Vagina (tissue), 2 donors: ENCODE measurements at regions of chr2 and their contacts with region 1.

Region 1: DNA sequence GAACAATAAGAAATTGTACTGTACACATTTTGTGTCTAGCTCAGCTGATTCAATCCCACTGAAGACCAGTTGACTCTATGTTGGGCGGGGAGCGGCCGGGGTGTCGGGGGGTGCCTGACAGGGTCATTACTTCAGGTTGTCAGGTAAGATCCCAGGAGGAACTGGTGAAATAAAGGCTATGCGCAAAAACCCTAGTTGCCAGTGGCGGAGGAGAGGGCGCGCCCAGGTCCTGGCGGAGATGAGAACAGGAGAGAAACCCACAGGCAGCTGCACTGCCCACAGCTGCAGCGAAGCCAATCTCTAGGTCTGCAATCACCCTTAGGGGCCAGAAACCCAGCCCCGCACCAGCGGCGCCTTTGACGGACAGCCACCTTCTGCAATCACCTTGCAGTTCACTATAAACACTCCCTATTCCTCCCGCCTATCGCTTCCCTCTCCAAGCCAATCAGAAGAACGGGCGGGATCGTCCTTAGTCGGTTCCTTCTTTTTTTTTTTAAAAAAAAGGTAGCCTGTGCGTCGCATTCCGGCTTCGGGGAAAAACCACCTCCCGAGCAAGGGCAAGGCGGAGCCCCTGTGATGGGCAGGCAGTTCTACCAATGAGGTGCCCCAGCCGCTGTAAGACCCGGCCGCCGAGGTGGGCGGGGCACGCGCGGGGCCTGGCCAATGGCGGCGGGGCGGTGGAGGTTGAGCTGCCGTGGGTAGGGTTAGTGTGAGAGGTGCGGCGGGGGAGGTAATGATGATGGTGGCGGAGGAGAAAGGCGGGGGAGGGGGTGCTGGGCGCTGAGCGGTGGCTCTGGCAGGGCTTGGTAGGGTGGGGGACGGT is at the start of gene EHBP1:
- DNase-seq: peak; percentile 97 to 100
- H3K4me3 ChIP-seq: peak within 1 kb of the TSS; percentile 86 to 97
- H3K27ac ChIP-seq: peak within 1 kb of the TSS; percentile 98
- H3K4me1 ChIP-seq: peaks cover 47% of the 10 kb centered on the region
- H3K27me3 ChIP-seq: no peaks in the 10 kb centered on the region
- CTCF ChIP-seq: no peak
- POLR2A ChIP-seq: peak in 1 of 2 donors; percentile 64
- total RNA-seq, gene EHBP1: 97.7 TPM

Region 2: DNA sequence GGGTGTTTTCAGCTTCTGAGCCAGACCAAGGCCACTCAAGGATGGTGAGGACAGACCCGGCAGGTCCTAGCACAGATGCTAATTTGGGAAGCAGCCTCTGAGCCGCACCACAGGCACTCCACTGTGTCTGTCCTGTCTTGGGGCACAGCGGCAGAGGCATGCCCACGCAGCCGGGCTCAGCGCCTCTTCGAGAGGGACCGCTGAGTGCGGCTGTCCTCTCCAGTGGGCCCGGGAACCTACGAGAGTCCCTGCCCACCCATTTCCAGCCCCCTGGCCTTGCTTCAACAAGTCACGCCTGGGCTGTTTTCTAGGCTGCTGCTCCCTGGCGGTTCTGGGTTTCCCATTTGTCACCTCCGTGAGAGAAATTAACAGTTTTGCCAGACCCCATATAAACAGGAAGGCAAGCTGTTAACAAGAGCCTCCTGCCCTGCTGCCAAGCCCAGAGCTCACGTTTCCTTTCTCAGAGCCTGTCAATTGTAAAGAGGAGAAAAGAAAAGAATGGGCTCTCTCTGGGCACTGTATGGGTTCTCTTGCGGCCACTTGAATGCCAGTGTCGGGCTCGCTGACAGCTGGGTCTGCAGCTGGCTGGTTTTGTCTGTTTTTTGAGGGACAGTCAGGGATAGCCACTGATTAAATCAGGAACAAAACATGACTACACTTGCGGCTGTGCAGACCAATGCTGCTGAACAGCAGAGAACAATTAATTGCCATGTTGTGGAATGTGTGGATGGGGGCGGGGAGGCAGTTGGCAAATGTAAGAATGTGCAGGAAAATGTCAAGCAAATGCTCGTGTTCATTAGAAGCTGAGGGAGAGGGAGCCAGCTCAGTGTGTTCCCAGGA is 229.8 kb before region 1 on chr2:
- intact Hi-C with region 1: loop called (anchors 10 kb)
- DNase-seq: no peak
- H3K4me3 ChIP-seq: no peak overlapping the region
- H3K27ac ChIP-seq: peak overlapping the region; percentile 42
- H3K4me1 ChIP-seq: peaks cover 79% of the 10 kb centered on the region
- H3K27me3 ChIP-seq: no peaks in the 10 kb centered on the region
- CTCF ChIP-seq: no peak
- POLR2A ChIP-seq: no peak

Region 3: GRCh38 chr2:62611854-62612253 is 93.4 kb before region 1 on chr2:
- intact Hi-C with region 1: no loop called
- DNase-seq: no peak
- H3K4me3 ChIP-seq: no peak overlapping the region
- H3K27ac ChIP-seq: no peak overlapping the region
- H3K4me1 ChIP-seq: peaks cover 11% of the 10 kb centered on the region
- H3K27me3 ChIP-seq: no peaks in the 10 kb centered on the region
- CTCF ChIP-seq: no peak
- POLR2A ChIP-seq: no peak

Region 4: DNA sequence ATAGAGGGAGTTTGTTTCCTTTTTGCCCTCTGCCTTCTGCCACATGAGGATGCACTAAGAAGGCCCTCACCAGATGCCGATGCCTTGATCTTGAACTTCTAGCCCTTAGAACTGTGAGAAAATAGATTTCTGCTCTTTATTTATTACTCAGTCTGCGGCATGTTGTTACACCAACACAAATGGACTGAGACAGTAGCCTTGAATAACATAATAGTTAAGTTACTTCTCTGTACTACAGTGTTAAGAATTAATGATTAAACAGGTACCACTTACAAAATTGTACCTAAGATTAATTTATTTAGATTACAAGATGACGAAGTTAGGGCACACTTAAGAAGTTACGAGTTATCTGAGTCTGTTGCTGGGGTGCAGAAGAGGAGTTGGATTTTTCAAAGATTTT is 42.7 kb after region 1 on chr2:
- intact Hi-C with region 1: no loop called
- DNase-seq: no peak
- H3K4me3 ChIP-seq: no peak overlapping the region
- H3K27ac ChIP-seq: no peak overlapping the region
- H3K4me1 ChIP-seq: peaks cover 17% of the 10 kb centered on the region
- H3K27me3 ChIP-seq: no peaks in the 10 kb centered on the region
- CTCF ChIP-seq: no peak
- POLR2A ChIP-seq: no peak